CD4-positive, alpha-beta T cell (primary cell): ENCODE measurements at regions of chr7 and their contacts with region 1.

Region 1: GRCh38 chr7:131071786-131072504 is 255.7 kb upstream of the MKLN1 start:
- DNase-seq: peak in 2 of 14 experiments; percentile 14 to 37
- ATAC-seq: no peak
- H3K4me3 ChIP-seq: no peak overlapping the region
- H3K4me3 Mint-ChIP-seq: no peak overlapping the region
- H3K27ac ChIP-seq: no peak overlapping the region
- H3K27ac Mint-ChIP-seq: peak overlapping the region; percentile 46
- H3K4me1 ChIP-seq: peaks cover 54% of the 10 kb centered on the region
- H3K4me1 Mint-ChIP-seq: peaks cover 38% of the 10 kb centered on the region
- H3K27me3 ChIP-seq: no peaks in the 10 kb centered on the region
- H3K27me3 Mint-ChIP-seq: no peaks in the 10 kb centered on the region
- CTCF ChIP-seq: peak; percentile 48

Region 2: GRCh38 chr7:130838738-130839137 is 233.2 kb before region 1 on chr7:
- CTCF ChIA-PET with region 1: no interaction called
- POLR2A ChIA-PET with region 1: no interaction called
- intact Hi-C with region 1: no loop called
- DNase-seq: no peak
- ATAC-seq: no peak
- H3K4me3 ChIP-seq: no peak overlapping the region
- H3K4me3 Mint-ChIP-seq: no peak overlapping the region
- H3K27ac ChIP-seq: no peak overlapping the region
- H3K27ac Mint-ChIP-seq: no peak overlapping the region
- H3K4me1 ChIP-seq: no peaks in the 10 kb centered on the region
- H3K4me1 Mint-ChIP-seq: peaks cover 6% of the 10 kb centered on the region
- H3K27me3 ChIP-seq: peaks cover 0 to 3% of the 10 kb centered on the region in 2 experiments
- H3K27me3 Mint-ChIP-seq: peaks cover 27% of the 10 kb centered on the region
- CTCF ChIP-seq: no peak

Region 3: GRCh38 chr7:131057015-131057793 is 14.7 kb before region 1 on chr7:
- CTCF ChIA-PET with region 1: interaction called, 10 read pairs
- POLR2A ChIA-PET with region 1: interaction called, 3 read pairs
- intact Hi-C with region 1: loop called in 1 of 2 experiments (anchors 2 kb)
- DNase-seq: peak in 3 of 14 experiments; percentile 75 to 88 (median 79)
- ATAC-seq: peak; percentile 54
- H3K4me3 ChIP-seq: peak overlapping the region; percentile 32
- H3K4me3 Mint-ChIP-seq: peak overlapping the region; percentile 88
- H3K27ac ChIP-seq: peak overlapping the region; percentile 72 to 80
- H3K27ac Mint-ChIP-seq: peak overlapping the region; percentile 95
- H3K4me1 ChIP-seq: peaks cover 86% of the 10 kb centered on the region
- H3K4me1 Mint-ChIP-seq: peaks cover 86% of the 10 kb centered on the region
- H3K27me3 ChIP-seq: no peaks in the 10 kb centered on the region
- H3K27me3 Mint-ChIP-seq: no peaks in the 10 kb centered on the region
- CTCF ChIP-seq: no peak

Region 4: DNA sequence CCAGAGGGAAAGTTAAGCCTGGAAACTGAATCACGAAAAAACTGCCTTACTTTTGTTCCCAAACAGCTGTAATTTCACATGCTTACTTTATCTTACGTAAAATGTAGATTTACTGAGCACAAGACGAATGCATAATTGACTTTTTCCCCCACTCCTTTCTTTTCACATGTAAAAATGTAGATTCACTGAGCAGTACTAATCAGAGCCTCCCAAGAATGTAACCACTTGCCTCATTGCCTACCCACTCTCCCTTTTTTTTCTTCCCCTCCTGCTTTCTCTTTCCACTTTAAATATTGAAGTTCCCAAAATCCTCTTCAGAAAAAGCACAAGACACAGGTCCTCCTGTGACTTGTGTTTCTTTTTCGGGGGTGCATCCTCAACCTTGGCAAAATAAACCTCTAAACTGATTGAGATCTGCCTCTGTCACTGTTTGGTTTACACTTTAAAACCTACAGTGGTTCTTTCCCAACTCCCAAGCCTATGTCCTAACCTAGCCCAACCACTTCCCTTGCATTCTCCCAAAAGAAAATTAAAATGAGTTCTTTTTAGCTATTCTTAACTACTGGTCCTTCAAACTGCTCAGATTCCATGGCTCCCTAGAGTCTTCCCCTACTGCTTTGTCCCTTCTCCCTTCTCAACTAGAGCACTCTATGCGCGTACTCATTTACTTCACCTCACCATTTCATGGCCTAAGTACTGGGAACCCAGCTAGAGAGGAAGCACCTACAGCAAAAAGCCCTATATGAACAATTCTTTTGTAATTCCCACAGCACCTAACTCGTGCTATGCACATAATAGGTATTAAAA is 19.1 kb after region 1 on chr7:
- CTCF ChIA-PET with region 1: interaction called, 4 read pairs
- POLR2A ChIA-PET with region 1: interaction called, 3 read pairs
- intact Hi-C with region 1: loop called in 1 of 2 experiments (anchors 2 kb)
- DNase-seq: no peak
- ATAC-seq: no peak
- H3K4me3 ChIP-seq: no peak overlapping the region
- H3K4me3 Mint-ChIP-seq: peak overlapping the region; percentile 43
- H3K27ac ChIP-seq: no peak overlapping the region
- H3K27ac Mint-ChIP-seq: peak overlapping the region; percentile 28
- H3K4me1 ChIP-seq: peaks cover 49% of the 10 kb centered on the region
- H3K4me1 Mint-ChIP-seq: peaks cover 80% of the 10 kb centered on the region
- H3K27me3 ChIP-seq: no peaks in the 10 kb centered on the region
- H3K27me3 Mint-ChIP-seq: no peaks in the 10 kb centered on the region
- CTCF ChIP-seq: no peak

Region 5: GRCh38 chr7:131164025-131164899 is 92.3 kb after region 1 on chr7:
- CTCF ChIA-PET with region 1: no interaction called
- POLR2A ChIA-PET with region 1: no interaction called
- intact Hi-C with region 1: no loop called
- DNase-seq: no peak
- ATAC-seq: no peak
- H3K4me3 ChIP-seq: no peak overlapping the region
- H3K4me3 Mint-ChIP-seq: no peak overlapping the region
- H3K27ac ChIP-seq: no peak overlapping the region
- H3K27ac Mint-ChIP-seq: no peak overlapping the region
- H3K4me1 ChIP-seq: no peaks in the 10 kb centered on the region
- H3K4me1 Mint-ChIP-seq: no peaks in the 10 kb centered on the region
- H3K27me3 ChIP-seq: no peaks in the 10 kb centered on the region
- H3K27me3 Mint-ChIP-seq: no peaks in the 10 kb centered on the region
- CTCF ChIP-seq: no peak

Region 6: GRCh38 chr7:131212114-131212513 is 140.2 kb after region 1 on chr7:
- CTCF ChIA-PET with region 1: no interaction called
- POLR2A ChIA-PET with region 1: no interaction called
- intact Hi-C with region 1: no loop called
- DNase-seq: no peak
- ATAC-seq: no peak
- H3K4me3 ChIP-seq: no peak overlapping the region
- H3K4me3 Mint-ChIP-seq: no peak overlapping the region
- H3K27ac ChIP-seq: no peak overlapping the region
- H3K27ac Mint-ChIP-seq: no peak overlapping the region
- H3K4me1 ChIP-seq: no peaks in the 10 kb centered on the region
- H3K4me1 Mint-ChIP-seq: no peaks in the 10 kb centered on the region
- H3K27me3 ChIP-seq: no peaks in the 10 kb centered on the region
- H3K27me3 Mint-ChIP-seq: no peaks in the 10 kb centered on the region
- CTCF ChIP-seq: no peak

Region 7: DNA sequence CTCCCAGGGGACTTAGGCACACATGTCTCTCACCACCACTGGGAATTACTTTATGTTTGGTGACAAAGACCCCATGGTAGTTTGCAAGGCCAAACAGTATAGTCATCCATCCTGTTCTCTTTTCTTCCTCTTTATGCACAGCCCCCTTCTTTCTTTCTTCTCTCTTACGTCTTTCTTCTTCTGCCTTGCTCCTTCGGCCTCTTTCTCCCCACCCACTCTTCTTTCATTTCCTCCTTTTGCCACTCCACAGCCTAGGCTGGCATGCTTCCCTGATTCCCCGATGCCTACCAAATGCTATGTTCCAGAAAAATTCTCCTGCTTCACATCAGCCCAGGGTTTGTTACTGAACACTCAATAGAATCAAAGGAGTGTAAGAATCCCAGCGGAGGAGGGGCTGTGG is 193.3 kb after region 1 on chr7:
- CTCF ChIA-PET with region 1: no interaction called
- POLR2A ChIA-PET with region 1: no interaction called
- intact Hi-C with region 1: no loop called
- DNase-seq: no peak
- ATAC-seq: no peak
- H3K4me3 ChIP-seq: no peak overlapping the region
- H3K4me3 Mint-ChIP-seq: no peak overlapping the region
- H3K27ac ChIP-seq: no peak overlapping the region
- H3K27ac Mint-ChIP-seq: no peak overlapping the region
- H3K4me1 ChIP-seq: no peaks in the 10 kb centered on the region
- H3K4me1 Mint-ChIP-seq: no peaks in the 10 kb centered on the region
- H3K27me3 ChIP-seq: no peaks in the 10 kb centered on the region
- H3K27me3 Mint-ChIP-seq: no peaks in the 10 kb centered on the region
- CTCF ChIP-seq: no peak

Region 8: GRCh38 chr7:131302876-131303707 is 231.1 kb after region 1 on chr7:
- CTCF ChIA-PET with region 1: interaction called, 4 read pairs
- POLR2A ChIA-PET with region 1: interaction called, 3 read pairs
- intact Hi-C with region 1: loop called (anchors 2 to 5 kb)
- DNase-seq: peak in 13 of 14 experiments; percentile 12 to 64 (median 24)
- ATAC-seq: peak; percentile 65
- H3K4me3 ChIP-seq: no peak overlapping the region
- H3K4me3 Mint-ChIP-seq: no peak overlapping the region
- H3K27ac ChIP-seq: no peak overlapping the region
- H3K27ac Mint-ChIP-seq: no peak overlapping the region
- H3K4me1 ChIP-seq: no peaks in the 10 kb centered on the region
- H3K4me1 Mint-ChIP-seq: no peaks in the 10 kb centered on the region
- H3K27me3 ChIP-seq: no peaks in the 10 kb centered on the region
- H3K27me3 Mint-ChIP-seq: no peaks in the 10 kb centered on the region
- CTCF ChIP-seq: peak; percentile 70

Region 9: DNA sequence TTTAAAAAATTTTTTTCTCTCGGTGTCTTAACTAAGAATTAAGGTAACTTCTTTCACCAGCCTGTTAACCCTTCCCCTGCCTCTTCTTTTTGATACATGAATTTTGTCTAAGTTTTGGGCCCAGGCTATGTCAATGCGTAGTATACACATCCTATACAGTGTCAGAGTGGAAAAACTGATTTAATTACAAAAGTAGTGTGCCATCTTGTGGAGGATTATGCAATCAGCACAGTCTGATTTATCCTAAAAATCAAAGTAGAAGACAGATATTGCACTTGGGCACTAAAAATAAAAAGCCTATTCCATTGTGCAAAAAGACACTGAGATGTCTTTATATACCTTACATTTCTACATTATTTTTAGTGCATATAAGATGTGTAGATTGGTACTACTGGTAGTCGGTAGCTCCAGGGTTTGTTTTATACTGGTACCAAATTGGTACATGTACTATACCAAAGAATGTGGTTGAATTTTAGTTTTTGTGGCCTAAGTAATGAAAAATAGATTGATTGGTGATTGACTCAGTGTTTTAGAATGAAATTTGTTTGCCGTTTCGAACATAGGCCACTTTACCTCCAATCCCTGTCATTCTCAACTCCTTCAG is 352.4 kb after region 1 on chr7:
- CTCF ChIA-PET with region 1: no interaction called
- POLR2A ChIA-PET with region 1: no interaction called
- intact Hi-C with region 1: loop called (anchors 2 kb)
- DNase-seq: peak in 4 of 14 experiments; percentile 17 to 62 (median 60)
- ATAC-seq: peak; percentile 93
- H3K4me3 ChIP-seq: no peak overlapping the region
- H3K4me3 Mint-ChIP-seq: no peak overlapping the region
- H3K27ac ChIP-seq: no peak overlapping the region
- H3K27ac Mint-ChIP-seq: no peak overlapping the region
- H3K4me1 ChIP-seq: no peaks in the 10 kb centered on the region
- H3K4me1 Mint-ChIP-seq: peaks cover 18% of the 10 kb centered on the region
- H3K27me3 ChIP-seq: no peaks in the 10 kb centered on the region
- H3K27me3 Mint-ChIP-seq: no peaks in the 10 kb centered on the region
- CTCF ChIP-seq: peak; percentile 64